ENCODE measurements at regions of chr7 and their contacts with region 1.

Region 1: DNA sequence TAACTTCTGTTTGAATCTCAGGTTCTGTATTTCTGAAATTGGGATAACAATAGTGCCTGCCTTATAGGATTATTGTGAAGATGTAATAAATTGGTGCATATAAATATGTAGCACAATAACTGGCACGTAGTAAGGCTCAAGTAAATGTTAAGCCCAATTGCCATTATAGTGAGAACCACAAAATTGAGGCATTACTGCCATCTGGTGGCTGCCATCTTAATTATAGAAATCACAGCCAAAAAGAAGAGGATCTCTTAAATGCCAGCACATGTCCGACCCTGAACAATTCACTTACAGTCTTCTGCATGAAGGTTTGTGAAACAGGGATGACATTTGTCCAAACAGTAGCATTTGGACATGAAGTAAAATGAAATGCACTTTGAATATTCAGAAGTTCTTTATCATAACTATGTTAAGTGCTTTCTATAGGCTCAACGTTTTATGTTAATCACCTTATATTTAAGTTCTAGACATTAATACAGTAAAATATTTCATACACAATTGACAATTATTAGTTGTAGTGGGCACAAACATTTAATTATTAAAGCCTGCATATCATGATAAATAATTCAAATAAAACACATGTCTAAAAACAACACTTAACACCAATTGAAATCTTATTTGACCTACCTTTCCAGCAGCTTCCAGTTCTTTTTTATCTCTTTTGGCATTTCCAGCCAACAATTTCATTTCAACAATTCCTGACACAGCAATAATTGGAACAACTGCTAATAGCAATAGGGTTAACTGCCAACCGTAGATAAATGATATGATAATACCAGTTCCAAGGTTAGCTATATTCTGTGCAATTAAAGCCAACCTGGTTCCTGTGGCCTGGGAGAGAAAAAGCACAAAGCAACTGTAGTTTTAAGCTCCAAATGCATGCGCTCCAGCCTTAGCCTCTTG is 58.5 kb downstream of the ABCB4 start:
- DNase-seq: no peak
- ATAC-seq: peak; percentile 56
- H3K4me3 Mint-ChIP-seq: no peak overlapping the region
- H3K27ac Mint-ChIP-seq: no peak overlapping the region
- H3K4me1 Mint-ChIP-seq: peaks cover 20% of the 10 kb centered on the region
- H3K27me3 Mint-ChIP-seq: no peaks in the 10 kb centered on the region
- CTCF ChIP-seq: peak; percentile 68

Region 2: DNA sequence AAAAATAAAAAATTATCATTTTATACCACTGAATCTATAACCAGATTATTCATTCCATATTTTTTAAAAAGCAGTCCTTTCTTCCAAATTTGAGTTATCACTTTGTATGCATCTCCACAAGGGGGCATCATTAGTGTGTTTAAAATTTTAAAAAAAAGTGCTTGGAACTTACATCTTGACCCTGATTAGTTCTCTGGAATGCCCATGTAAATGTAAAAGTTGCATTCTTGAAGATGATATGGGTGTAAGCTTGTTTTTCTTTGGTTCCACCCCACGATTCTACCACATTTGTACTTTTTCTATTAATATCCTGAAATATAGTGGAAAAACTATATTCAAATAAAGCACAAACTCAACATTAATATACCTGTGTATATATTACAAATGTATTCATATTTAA is 502.4 kb before region 1 on chr7:
- CTCF ChIA-PET with region 1: interaction called, 3 read pairs
- POLR2A ChIA-PET with region 1: no interaction called
- intact Hi-C with region 1: loop called (anchors 1 kb)
- DNase-seq: no peak
- ATAC-seq: no peak
- H3K4me3 Mint-ChIP-seq: no peak overlapping the region
- H3K27ac Mint-ChIP-seq: no peak overlapping the region
- H3K4me1 Mint-ChIP-seq: no peaks in the 10 kb centered on the region
- H3K27me3 Mint-ChIP-seq: no peaks in the 10 kb centered on the region
- CTCF ChIP-seq: no peak

Region 3: DNA sequence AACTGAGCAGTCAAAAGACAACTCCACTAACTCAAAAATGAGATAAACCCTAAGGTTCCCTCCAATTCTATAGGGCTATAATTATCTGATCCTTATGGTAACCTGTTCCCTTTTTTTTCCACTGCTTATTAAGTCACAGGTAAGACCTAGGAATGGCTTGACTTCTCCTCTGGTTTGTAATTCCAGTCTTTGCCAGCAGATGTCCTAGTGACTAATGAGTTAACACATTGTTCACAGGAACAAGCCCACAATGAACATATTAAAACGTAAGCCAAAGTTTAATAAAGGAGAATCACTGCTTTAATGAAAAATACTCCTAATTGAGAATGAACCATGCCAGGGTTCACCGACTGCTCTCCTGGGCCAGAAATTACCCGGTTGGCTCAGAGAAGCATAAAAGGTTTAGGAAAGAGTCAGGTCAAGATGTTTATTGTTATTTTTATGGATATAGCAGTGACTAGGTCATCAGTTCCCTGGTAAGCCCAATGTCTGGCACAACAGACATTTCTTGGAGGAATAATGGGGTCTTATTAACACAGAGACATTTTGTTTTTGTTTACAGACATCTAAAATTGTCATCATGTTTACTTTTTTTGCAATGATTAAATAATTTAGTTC is 477.6 kb before region 1 on chr7:
- CTCF ChIA-PET with region 1: no interaction called
- POLR2A ChIA-PET with region 1: no interaction called
- intact Hi-C with region 1: loop called (anchors 1 kb)
- DNase-seq: no peak
- ATAC-seq: peak; percentile 66
- H3K4me3 Mint-ChIP-seq: no peak overlapping the region
- H3K27ac Mint-ChIP-seq: no peak overlapping the region
- H3K4me1 Mint-ChIP-seq: no peaks in the 10 kb centered on the region
- H3K27me3 Mint-ChIP-seq: no peaks in the 10 kb centered on the region
- CTCF ChIP-seq: peak; percentile 35

Region 4: DNA sequence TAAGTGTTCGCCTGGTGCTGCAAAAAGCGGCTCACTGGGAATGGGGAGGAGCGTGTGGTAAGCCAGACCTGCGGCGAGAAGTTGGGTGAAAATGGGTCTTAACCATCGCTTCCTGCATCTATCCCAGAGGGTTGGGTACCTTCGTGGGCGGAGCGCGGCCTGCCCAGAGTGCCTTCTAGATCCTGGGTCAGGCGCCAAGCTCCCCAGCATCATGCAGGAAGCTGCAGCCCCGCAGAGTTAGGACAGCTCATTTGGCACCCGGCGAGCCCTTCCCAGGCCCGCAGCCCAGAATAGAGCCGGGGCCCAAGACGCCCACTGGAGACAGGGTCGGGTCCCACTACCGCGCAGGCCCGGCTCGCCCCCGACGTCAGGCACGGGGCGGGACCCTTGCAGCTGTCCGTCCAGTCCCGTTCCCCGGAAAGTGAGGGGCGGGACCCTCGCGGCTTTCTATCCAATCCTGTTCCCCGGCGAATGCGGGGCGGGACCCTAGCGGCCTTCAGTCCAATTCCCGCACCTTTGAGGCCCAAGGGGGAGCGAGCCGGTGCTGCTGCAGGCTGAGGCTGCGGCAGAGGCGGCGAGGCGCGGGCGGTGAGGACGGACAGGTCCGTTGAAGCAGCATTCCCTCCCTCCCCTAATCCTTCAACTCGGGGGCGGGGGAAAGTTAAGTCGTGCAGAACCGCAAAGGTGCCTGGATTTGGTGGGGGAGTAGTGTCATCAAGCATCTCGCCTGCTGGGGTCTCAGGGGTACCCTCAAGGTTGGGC is 71.6 kb before region 1 on chr7 and contains the start of gene CROT:
- CTCF ChIA-PET with region 1: no interaction called
- POLR2A ChIA-PET with region 1: interaction called, 4 read pairs
- intact Hi-C with region 1: loop called (anchors 1 kb)
- DNase-seq: peak; percentile 95
- ATAC-seq: peak; percentile 98
- H3K4me3 Mint-ChIP-seq: peak within 1 kb of the TSS; percentile 96
- H3K27ac Mint-ChIP-seq: peak within 1 kb of the TSS; percentile 96
- H3K4me1 Mint-ChIP-seq: peaks cover 25% of the 10 kb centered on the region
- H3K27me3 Mint-ChIP-seq: no peaks in the 10 kb centered on the region
- CTCF ChIP-seq: no peak
- total RNA-seq, gene CROT: 7.9 and 9.2 TPM in 2 replicates

Region 5: DNA sequence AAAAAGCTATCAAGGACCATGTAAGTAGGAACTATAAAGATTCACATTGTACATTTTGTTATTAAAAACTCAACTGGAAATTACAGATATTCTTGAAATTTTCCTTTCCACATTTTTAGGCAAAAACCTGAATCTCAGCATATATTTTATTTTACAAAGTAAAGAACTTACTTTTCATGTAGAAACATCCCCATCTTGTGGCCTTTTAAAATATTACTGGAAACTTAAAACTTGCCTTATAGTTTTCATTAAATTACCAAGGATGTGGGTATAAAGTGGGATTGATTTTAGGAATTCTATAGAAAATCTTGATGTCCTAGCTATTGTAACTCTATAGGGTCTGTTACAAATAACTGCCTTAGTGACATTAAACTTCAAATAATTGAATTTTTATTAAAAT is 469.9 kb after region 1 on chr7:
- CTCF ChIA-PET with region 1: interaction called, 3 read pairs
- POLR2A ChIA-PET with region 1: no interaction called
- intact Hi-C with region 1: loop called (anchors 2 kb)
- DNase-seq: no peak
- ATAC-seq: no peak
- H3K4me3 Mint-ChIP-seq: no peak overlapping the region
- H3K27ac Mint-ChIP-seq: no peak overlapping the region
- H3K4me1 Mint-ChIP-seq: no peaks in the 10 kb centered on the region
- H3K27me3 Mint-ChIP-seq: no peaks in the 10 kb centered on the region
- CTCF ChIP-seq: no peak

Measured in activated B cell treated with CpG ODN at 0.5 μM for 24 hours (primary cell).